Activated naive CD4-positive, alpha-beta T cell treated with anti-CD3 and anti-CD28 coated beads for 36 hours (primary cell): ENCODE measurements at regions of chr9 and their contacts with region 1.

Region 1: GRCh38 chr9:134291961-134292871 is 34.0 kb upstream of the RXRA start:
- DNase-seq: no peak
- H3K4me3 Mint-ChIP-seq: no peak overlapping the region
- H3K27ac Mint-ChIP-seq: no peak overlapping the region
- H3K4me1 Mint-ChIP-seq: peaks cover 3% of the 10 kb centered on the region
- H3K27me3 Mint-ChIP-seq: no peaks in the 10 kb centered on the region

Region 2: GRCh38 chr9:134325817-134326723 is 33.9 kb after region 1 on chr9 and contains the start of gene RXRA:
- CTCF ChIA-PET with region 1: no interaction called
- intact Hi-C with region 1: loop called (anchors 1 kb)
- DNase-seq: peak; percentile 37
- H3K4me3 Mint-ChIP-seq: peak within 1 kb of the TSS; percentile 54
- H3K27ac Mint-ChIP-seq: no peak within 1 kb of the TSS
- H3K4me1 Mint-ChIP-seq: peaks cover 5% of the 10 kb centered on the region
- H3K27me3 Mint-ChIP-seq: peaks cover 7% of the 10 kb centered on the region
- total RNA-seq, gene RXRA: 2.1 to 2.2 TPM